ENCODE measurements at regions of chr17 and their contacts with region 1.

Region 1: GRCh38 chr17:76278952-76279741 is 14.0 kb downstream of the UBALD2 start:
- DNase-seq: peak; percentile 90
- H3K4me3 Mint-ChIP-seq: no peak overlapping the region
- H3K27ac Mint-ChIP-seq: peak overlapping the region; percentile 52
- H3K4me1 Mint-ChIP-seq: peaks cover 16% of the 10 kb centered on the region
- H3K27me3 Mint-ChIP-seq: peaks cover 4% of the 10 kb centered on the region

Region 2: DNA sequence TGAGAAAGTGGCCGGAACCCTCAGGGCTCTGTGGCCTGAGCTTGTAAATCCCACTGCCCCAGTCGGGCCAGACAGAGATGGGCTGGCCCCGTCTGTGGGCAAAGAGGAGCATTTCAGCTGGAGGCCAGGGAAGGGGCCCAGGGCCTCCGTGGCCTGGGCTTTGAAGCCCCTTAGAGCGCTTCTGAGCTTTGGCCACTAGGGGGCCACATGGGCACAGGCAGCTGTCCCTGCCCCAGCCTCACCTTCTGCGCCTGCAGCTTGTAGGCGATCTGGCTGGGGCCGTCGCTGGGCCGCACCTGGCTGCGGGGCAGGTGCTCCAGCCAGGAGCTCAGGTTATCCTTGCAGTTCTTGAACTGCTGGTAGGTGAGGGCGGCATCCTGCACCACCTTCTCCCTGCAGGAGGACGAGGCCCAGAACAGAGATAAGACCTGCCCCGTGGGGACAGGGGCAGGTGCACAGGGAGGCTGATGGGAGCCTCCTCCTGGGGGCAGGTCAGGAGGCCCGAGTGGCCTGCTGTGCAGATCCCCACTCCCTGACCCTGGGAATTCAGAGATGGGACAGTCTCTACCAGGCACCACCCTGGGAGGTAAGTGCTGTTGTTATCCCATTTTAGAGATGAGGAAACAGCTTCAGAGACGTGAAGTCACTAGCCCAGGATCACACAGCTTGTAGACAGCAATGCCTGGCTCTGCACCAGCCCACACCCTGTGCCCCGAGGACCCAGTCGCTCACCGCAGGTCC is 264.8 kb before region 1 on chr17:
- CTCF ChIA-PET with region 1: interaction called, 42 read pairs
- DNase-seq: peak; percentile 87
- H3K4me3 Mint-ChIP-seq: no peak overlapping the region
- H3K27ac Mint-ChIP-seq: peak overlapping the region; percentile 52
- H3K4me1 Mint-ChIP-seq: peaks cover 5% of the 10 kb centered on the region
- H3K27me3 Mint-ChIP-seq: peaks cover 28% of the 10 kb centered on the region

Region 3: GRCh38 chr17:76115138-76115754 is 163.9 kb before region 1 on chr17:
- CTCF ChIA-PET with region 1: interaction called, 215 read pairs
- DNase-seq: no peak
- H3K4me3 Mint-ChIP-seq: no peak overlapping the region
- H3K27ac Mint-ChIP-seq: no peak overlapping the region
- H3K4me1 Mint-ChIP-seq: no peaks in the 10 kb centered on the region
- H3K27me3 Mint-ChIP-seq: peaks cover 18% of the 10 kb centered on the region

Region 4: DNA sequence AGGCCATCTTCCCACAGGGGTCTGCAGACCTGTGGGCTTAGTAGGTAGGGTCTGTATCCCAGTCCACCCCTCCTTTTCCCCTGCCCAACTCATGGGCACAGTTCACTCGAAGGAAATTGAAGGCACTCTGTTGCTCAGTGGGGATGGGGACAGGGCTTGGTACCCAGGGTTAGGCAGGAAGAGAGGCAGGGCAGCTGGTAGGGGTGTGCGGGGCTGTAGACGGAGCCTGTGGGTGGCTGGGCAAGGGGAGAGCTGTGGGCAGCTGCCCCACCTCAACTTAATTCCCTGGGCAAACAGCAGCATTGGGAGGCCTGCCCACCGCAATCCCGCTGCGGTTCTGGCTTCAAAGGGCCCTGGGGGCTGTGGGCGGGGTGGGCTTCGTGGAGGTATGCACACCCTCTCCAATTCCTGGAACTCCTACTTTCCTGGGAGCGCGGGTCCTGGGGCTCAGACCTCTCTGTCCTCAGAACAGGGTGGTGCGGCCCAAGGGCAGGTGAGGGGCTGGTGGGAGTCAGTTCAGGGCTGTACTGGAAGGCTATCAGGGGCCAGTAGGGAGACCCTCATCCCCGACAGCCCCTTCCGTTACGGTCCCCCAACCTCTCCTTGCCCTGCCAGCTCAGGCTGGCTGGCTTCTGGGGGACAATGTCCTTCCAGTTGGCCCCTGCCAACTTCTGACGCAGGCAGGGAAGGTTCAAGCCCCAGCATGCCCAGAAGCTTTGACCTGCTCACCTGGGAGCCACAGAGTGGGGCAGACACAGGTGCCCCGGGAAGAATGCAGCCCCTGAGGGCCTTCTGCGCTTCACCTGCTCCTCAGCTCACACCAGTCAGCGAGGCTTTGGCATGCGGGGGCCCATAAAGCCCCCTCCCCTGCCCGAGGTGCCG is 147.2 kb before region 1 on chr17:
- CTCF ChIA-PET with region 1: interaction called, 215 read pairs
- DNase-seq: no peak
- H3K4me3 Mint-ChIP-seq: no peak overlapping the region
- H3K27ac Mint-ChIP-seq: no peak overlapping the region
- H3K4me1 Mint-ChIP-seq: peaks cover 48% of the 10 kb centered on the region
- H3K27me3 Mint-ChIP-seq: peaks cover 15% of the 10 kb centered on the region

Region 5: GRCh38 chr17:76182016-76182764 is 97.0 kb before region 1 on chr17:
- CTCF ChIA-PET with region 1: interaction called, 51 read pairs
- DNase-seq: peak; percentile 97
- H3K4me3 Mint-ChIP-seq: peak overlapping the region; percentile 57
- H3K27ac Mint-ChIP-seq: peak overlapping the region; percentile 96
- H3K4me1 Mint-ChIP-seq: peaks cover 79% of the 10 kb centered on the region
- H3K27me3 Mint-ChIP-seq: no peaks in the 10 kb centered on the region

Region 6: GRCh38 chr17:76264755-76265596 is 14.2 kb before region 1 on chr17 and contains the start of gene UBALD2:
- CTCF ChIA-PET with region 1: interaction called, 13 read pairs
- DNase-seq: peak; percentile 99
- H3K4me3 Mint-ChIP-seq: peak within 1 kb of the TSS; percentile 96
- H3K27ac Mint-ChIP-seq: peak within 1 kb of the TSS; percentile 99
- H3K4me1 Mint-ChIP-seq: peaks cover 60% of the 10 kb centered on the region
- H3K27me3 Mint-ChIP-seq: peaks cover 5% of the 10 kb centered on the region

Region 7: DNA sequence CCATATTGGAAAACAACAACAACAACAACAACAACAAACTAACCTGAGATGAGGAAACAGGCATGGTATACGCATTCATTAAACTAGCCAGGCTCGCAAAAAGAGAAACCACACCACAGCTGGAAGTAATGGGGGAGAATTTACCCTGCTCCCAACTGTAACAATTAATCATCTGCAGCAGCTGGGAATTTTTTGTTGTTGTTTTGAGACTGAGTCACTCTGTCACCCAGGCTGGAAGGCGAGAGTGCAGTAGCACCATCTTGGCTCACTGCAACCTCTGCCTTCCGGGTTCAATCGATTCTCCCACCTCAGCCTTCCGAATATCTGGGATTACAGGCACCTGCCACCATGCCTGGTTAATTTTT is 58.2 kb after region 1 on chr17:
- CTCF ChIA-PET with region 1: no interaction called
- DNase-seq: no peak
- H3K4me3 Mint-ChIP-seq: no peak overlapping the region
- H3K27ac Mint-ChIP-seq: no peak overlapping the region
- H3K4me1 Mint-ChIP-seq: peaks cover 4% of the 10 kb centered on the region
- H3K27me3 Mint-ChIP-seq: no peaks in the 10 kb centered on the region

Measured in activated naive CD4-positive, alpha-beta T cell treated with anti-CD3 and anti-CD28 coated beads, Interleukin-2, amount 10 ng/mL, durations not matched to agents 7 days and 5 days (primary cell).